Activated B cell treated with CpG ODN at 0.5 μM for 24 hours (primary cell): ENCODE measurements at regions of chr9 and their contacts with region 1.

Region 1: GRCh38 chr9:34603610-34604231 is 8.2 kb downstream of the RPP25L start:
- DNase-seq: peak; percentile 75
- ATAC-seq: peak; percentile 97
- H3K4me3 Mint-ChIP-seq: no peak overlapping the region
- H3K27ac Mint-ChIP-seq: no peak overlapping the region
- H3K4me1 Mint-ChIP-seq: no peaks in the 10 kb centered on the region
- H3K27me3 Mint-ChIP-seq: peaks cover 9% of the 10 kb centered on the region
- CTCF ChIP-seq: peak; percentile 52

Region 2: GRCh38 chr9:34256104-34256503 is 347.6 kb before region 1 on chr9:
- CTCF ChIA-PET with region 1: no interaction called
- POLR2A ChIA-PET with region 1: no interaction called
- intact Hi-C with region 1: loop called (anchors 2 kb)
- DNase-seq: no peak
- ATAC-seq: peak; percentile 45
- H3K4me3 Mint-ChIP-seq: no peak overlapping the region
- H3K27ac Mint-ChIP-seq: no peak overlapping the region
- H3K4me1 Mint-ChIP-seq: peaks cover 15% of the 10 kb centered on the region
- H3K27me3 Mint-ChIP-seq: no peaks in the 10 kb centered on the region
- CTCF ChIP-seq: no peak

Region 3: GRCh38 chr9:34437006-34437925 is 166.5 kb before region 1 on chr9:
- CTCF ChIA-PET with region 1: interaction called, 4 read pairs
- POLR2A ChIA-PET with region 1: no interaction called
- intact Hi-C with region 1: loop called (anchors 1 kb)
- DNase-seq: no peak
- ATAC-seq: peak; percentile 85
- H3K4me3 Mint-ChIP-seq: no peak overlapping the region
- H3K27ac Mint-ChIP-seq: no peak overlapping the region
- H3K4me1 Mint-ChIP-seq: no peaks in the 10 kb centered on the region
- H3K27me3 Mint-ChIP-seq: no peaks in the 10 kb centered on the region
- CTCF ChIP-seq: no peak

Region 4: DNA sequence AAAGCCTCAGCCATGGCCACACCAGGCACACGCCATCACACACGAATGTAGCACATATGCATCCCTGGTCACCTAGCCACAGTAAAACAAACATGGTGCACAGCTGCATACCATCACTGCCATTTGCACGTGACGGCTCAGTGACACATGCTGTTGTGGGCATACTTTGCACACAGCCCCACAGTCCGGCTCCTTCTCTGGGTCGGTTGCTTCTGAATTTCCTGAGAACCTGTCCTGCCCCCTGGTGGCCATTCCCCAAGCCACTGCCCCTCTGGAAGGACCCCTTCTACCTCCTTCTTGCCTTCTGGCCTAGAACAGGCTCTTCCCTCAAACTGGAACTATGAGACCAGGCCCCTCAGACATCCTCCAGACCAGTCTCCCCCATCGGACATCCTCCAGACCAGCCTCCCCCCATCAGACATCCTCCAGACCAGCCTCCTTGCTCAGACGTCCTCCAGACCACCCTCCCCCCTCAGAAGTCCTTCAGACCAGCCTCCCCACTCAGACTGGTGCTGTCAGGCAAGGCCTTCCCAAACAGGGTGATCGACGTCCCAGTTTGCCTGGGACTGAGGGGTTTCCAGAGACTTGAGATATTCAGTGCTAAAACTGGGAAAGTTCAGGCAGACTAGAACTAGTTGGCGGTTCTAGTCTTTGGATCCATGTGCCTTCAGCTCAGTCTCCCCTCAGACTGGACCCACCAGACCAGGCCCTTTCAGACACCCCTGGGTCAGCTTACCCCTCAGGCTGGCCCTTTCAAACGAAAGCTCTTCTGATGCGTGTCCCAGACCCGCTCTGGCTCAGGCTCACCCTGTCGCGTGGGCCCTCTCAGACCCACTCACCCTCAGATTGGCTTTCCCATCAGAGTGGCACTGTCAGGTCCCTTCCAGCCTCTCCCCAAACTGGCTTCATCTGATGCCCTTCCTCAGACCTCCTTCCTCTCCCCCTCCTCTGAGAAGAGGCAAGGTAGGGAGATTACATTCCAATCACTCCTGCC is 56.6 kb before region 1 on chr9:
- CTCF ChIA-PET with region 1: interaction called, 12 read pairs
- POLR2A ChIA-PET with region 1: no interaction called
- intact Hi-C with region 1: loop called (anchors 1 kb)
- DNase-seq: no peak
- ATAC-seq: peak; percentile 58
- H3K4me3 Mint-ChIP-seq: no peak overlapping the region
- H3K27ac Mint-ChIP-seq: no peak overlapping the region
- H3K4me1 Mint-ChIP-seq: no peaks in the 10 kb centered on the region
- H3K27me3 Mint-ChIP-seq: peaks cover 29% of the 10 kb centered on the region
- CTCF ChIP-seq: no peak

Region 5: GRCh38 chr9:35657546-35658136 is 1053.9 kb after region 1 on chr9 and contains the start of gene RMRP:
- CTCF ChIA-PET with region 1: no interaction called
- POLR2A ChIA-PET with region 1: no interaction called
- intact Hi-C with region 1: no loop called
- DNase-seq: peak; percentile 81
- ATAC-seq: peak; percentile 81
- H3K4me3 Mint-ChIP-seq: peak within 1 kb of the TSS; percentile 88
- H3K27ac Mint-ChIP-seq: peak within 1 kb of the TSS; percentile 99
- H3K4me1 Mint-ChIP-seq: peaks cover 78% of the 10 kb centered on the region
- H3K27me3 Mint-ChIP-seq: peaks cover 5% of the 10 kb centered on the region
- CTCF ChIP-seq: no peak
- total RNA-seq, gene RMRP: 8,247 and 9,516 TPM in 2 replicates

Region 6: GRCh38 chr9:35690431-35691333 is 1087.0 kb after region 1 on chr9:
- CTCF ChIA-PET with region 1: no interaction called
- POLR2A ChIA-PET with region 1: no interaction called
- intact Hi-C with region 1: no loop called
- DNase-seq: peak; percentile 27
- ATAC-seq: peak; percentile 42
- H3K4me3 Mint-ChIP-seq: peak overlapping the region; percentile 86
- H3K27ac Mint-ChIP-seq: peak overlapping the region; percentile 76
- H3K4me1 Mint-ChIP-seq: peaks cover 12% of the 10 kb centered on the region
- H3K27me3 Mint-ChIP-seq: no peaks in the 10 kb centered on the region
- CTCF ChIP-seq: no peak